Psoas muscle (tissue), 8 donors: ENCODE measurements at regions of chr7 and their contacts with region 1.

Region 1: GRCh38 chr7:151558575-151558974 is 38.9 kb upstream of the RHEB start:
- DNase-seq: no peak
- ATAC-seq: no peak
- H3K4me3 ChIP-seq: no peak overlapping the region
- H3K27ac ChIP-seq: no peak overlapping the region
- H3K4me1 ChIP-seq: no peaks in the 10 kb centered on the region
- H3K27me3 ChIP-seq: no peaks in the 10 kb centered on the region
- CTCF ChIP-seq: no peak

Region 2: GRCh38 chr7:151372612-151373265 is 185.8 kb before region 1 on chr7:
- intact Hi-C with region 1: no loop called
- DNase-seq: no peak
- ATAC-seq: no peak
- H3K4me3 ChIP-seq: no peak overlapping the region
- H3K27ac ChIP-seq: no peak overlapping the region
- H3K4me1 ChIP-seq: peaks cover 4% of the 10 kb centered on the region
- H3K27me3 ChIP-seq: no peaks in the 10 kb centered on the region
- CTCF ChIP-seq: no peak

Region 3: GRCh38 chr7:151459726-151460473 is 98.7 kb before region 1 on chr7:
- intact Hi-C with region 1: no loop called
- DNase-seq: peak; percentile 84 to 90
- ATAC-seq: peak; percentile 84 to 85 (median 84)
- H3K4me3 ChIP-seq: peak overlapping the region; percentile 42
- H3K27ac ChIP-seq: peak overlapping the region; percentile 91
- H3K4me1 ChIP-seq: peaks cover 25% of the 10 kb centered on the region
- H3K27me3 ChIP-seq: no peaks in the 10 kb centered on the region
- CTCF ChIP-seq: no peak

Region 4: GRCh38 chr7:151611041-151611440 is 52.5 kb after region 1 on chr7:
- intact Hi-C with region 1: loop called in 1 of 2 experiments (anchors 2 kb)
- DNase-seq: no peak
- ATAC-seq: no peak
- H3K4me3 ChIP-seq: no peak overlapping the region
- H3K27ac ChIP-seq: no peak overlapping the region
- H3K4me1 ChIP-seq: no peaks in the 10 kb centered on the region
- H3K27me3 ChIP-seq: no peaks in the 10 kb centered on the region
- CTCF ChIP-seq: no peak